ENCODE measurements at regions of chr3 and their contacts with region 1.

Region 1: DNA sequence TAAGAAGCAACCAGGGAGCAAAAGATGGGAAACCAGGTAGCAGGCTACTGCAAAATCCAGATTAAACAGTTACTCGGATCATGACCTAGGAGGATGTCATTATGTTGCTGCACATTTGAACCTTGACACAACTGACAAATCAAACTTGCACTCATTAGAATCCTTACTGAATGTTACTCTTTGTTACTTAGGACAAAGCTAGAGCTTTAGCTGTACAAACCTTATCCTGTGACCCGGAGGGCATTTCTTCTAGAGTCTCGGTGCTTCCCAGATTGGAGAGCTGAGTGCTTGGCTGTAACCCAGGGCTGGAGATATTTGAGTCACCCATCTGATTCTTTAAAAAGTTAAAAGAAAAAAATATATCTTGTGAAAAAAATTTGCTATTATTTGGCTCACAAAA is 43.4 kb downstream of the DCP1A start:
- DNase-seq: no peak
- ATAC-seq: no peak
- H3K4me3 ChIP-seq: no peak overlapping the region
- H3K27ac ChIP-seq: no peak overlapping the region
- H3K4me1 ChIP-seq: no peaks in the 10 kb centered on the region
- H3K27me3 ChIP-seq: no peaks in the 10 kb centered on the region
- CTCF ChIP-seq: no peak
- EP300 ChIP-seq: no peak
- POLR2A ChIP-seq: no peak
- RAD21 ChIP-seq: no peak

Region 2: DNA sequence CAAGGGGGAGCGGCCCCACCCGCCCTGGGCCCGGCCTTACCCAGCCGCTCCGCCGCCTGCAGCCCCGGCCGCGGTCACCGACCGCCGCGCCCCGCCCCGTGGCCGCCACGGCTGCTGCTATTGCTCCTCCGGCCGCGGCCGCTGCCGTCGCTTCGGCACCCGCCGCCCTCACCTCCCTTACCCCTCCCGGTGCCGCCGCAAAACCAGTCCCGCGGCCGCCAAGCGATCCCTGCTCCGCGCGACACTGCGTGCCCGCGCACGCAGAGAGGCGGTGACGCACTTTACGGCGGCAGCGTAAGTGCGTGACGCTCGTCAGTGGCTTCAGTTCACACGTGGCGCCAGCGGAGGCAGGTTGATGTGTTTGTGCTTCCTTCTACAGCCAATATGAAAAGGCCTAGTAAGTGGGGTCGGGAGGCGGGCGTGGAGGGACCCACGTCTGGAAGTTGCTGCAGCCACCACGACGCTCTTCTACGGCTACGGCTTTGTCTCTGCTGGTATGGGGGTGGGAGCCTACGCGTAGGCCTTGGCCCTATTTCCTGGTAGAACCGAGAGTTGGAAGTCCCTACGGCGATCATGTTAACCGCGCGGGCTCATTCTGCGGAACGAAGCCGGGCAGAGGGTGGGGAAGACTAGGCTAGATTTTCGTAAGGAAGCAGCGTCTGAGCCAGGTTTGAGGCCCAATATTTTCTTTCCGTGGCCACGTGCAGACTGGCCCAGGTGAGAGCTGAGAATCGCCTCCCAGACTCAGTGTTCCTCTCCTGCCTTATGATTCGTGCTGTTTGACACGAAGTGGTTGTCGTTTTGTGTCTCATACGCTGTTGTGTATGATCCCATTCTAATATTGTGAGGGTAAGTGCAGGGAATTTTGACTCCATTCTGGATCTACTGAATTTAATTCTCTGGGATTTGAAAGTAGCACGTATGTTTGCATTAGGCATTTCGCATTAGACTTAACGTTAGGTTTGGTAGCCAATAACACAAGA is 618.0 kb before region 1 on chr3 and contains the starts of genes GNL3 and PBRM1:
- CTCF ChIA-PET with region 1: no interaction called
- POLR2A ChIA-PET with region 1: no interaction called
- RAD21 ChIA-PET with region 1: no interaction called
- SMC1A ChIA-PET with region 1: no interaction called
- in situ Hi-C with region 1: no loop called
- intact Hi-C with region 1: no loop called
- DNase-seq: peak; percentile 82
- ATAC-seq: peak; percentile 74
- H3K4me3 ChIP-seq: peak within 1 kb of the TSS; percentile 91
- H3K27ac ChIP-seq: peak within 1 kb of the TSS; percentile 90
- H3K4me1 ChIP-seq: peaks cover 30% of the 10 kb centered on the region
- H3K27me3 ChIP-seq: no peaks in the 10 kb centered on the region
- CTCF ChIP-seq: no peak
- EP300 ChIP-seq: no peak
- POLR2A ChIP-seq: peak; percentile 93
- RAD21 ChIP-seq: no peak
- polyA plus RNA-seq, gene GNL3: 246 to 274 TPM
- polyA plus RNA-seq, gene PBRM1: 8.9 to 14.1 TPM

Region 3: DNA sequence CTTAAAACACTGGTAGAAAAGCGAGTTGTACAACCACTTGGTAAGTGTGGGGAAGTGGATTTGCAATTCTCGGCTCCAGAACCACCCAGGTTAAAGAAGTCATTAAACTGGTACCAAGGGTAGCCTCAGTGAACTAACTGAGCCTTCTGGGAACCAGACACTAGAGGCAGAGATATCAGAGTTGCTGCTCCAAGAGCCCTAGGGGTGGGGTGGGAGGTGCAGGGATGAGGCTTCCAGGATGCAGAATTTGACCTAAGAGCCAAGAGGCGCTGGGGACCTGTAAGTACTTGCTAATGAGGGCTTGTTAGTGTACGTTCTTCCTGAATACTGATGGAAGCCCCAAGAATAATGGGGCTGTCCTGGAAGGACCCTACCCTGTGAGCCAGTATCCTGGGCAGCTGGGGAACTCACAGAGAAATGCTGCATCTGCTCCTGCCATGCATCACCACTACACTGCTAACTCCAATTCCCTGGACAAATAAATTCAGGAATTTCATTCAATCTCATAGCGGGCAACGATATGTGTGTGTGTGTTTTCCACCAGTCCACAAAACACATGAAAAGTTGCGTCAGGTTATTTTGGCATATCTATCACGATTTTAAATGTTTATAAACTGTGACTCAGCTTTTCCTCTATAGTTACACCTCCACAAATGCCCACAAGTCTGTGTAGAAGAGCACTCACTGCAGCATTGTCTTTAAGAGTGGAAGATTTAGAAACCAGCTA is 430.4 kb before region 1 on chr3:
- CTCF ChIA-PET with region 1: no interaction called
- POLR2A ChIA-PET with region 1: no interaction called
- RAD21 ChIA-PET with region 1: no interaction called
- SMC1A ChIA-PET with region 1: no interaction called
- in situ Hi-C with region 1: no loop called
- intact Hi-C with region 1: no loop called
- DNase-seq: no peak
- ATAC-seq: no peak
- H3K4me3 ChIP-seq: no peak overlapping the region
- H3K27ac ChIP-seq: no peak overlapping the region
- H3K4me1 ChIP-seq: peaks cover 7% of the 10 kb centered on the region; the same call in 1 of the 2 replicates
- H3K27me3 ChIP-seq: no peaks in the 10 kb centered on the region
- CTCF ChIP-seq: no peak
- EP300 ChIP-seq: no peak
- POLR2A ChIP-seq: no peak
- RAD21 ChIP-seq: no peak

Region 4: GRCh38 chr3:53287131-53287629 is 16.8 kb before region 1 on chr3:
- CTCF ChIA-PET with region 1: interaction called, 11 read pairs
- POLR2A ChIA-PET with region 1: no interaction called
- RAD21 ChIA-PET with region 1: no interaction called
- SMC1A ChIA-PET with region 1: no interaction called
- in situ Hi-C with region 1: no loop called
- intact Hi-C with region 1: no loop called
- DNase-seq: no peak
- ATAC-seq: no peak
- H3K4me3 ChIP-seq: no peak overlapping the region
- H3K27ac ChIP-seq: no peak overlapping the region
- H3K4me1 ChIP-seq: no peaks in the 10 kb centered on the region
- H3K27me3 ChIP-seq: no peaks in the 10 kb centered on the region
- CTCF ChIP-seq: no peak
- EP300 ChIP-seq: no peak
- POLR2A ChIP-seq: no peak
- RAD21 ChIP-seq: no peak

Region 5: GRCh38 chr3:53347261-53348064 is 43.5 kb after region 1 on chr3 and contains the start of gene DCP1A:
- CTCF ChIA-PET with region 1: interaction called, 14 read pairs
- POLR2A ChIA-PET with region 1: interaction called, 4 read pairs
- RAD21 ChIA-PET with region 1: no interaction called
- SMC1A ChIA-PET with region 1: interaction called, 3 read pairs
- in situ Hi-C with region 1: no loop called
- intact Hi-C with region 1: no loop called
- DNase-seq: peak; percentile 89
- ATAC-seq: peak; percentile 97
- H3K4me3 ChIP-seq: peak within 1 kb of the TSS; percentile 99
- H3K27ac ChIP-seq: peak within 1 kb of the TSS; percentile 94
- H3K4me1 ChIP-seq: no peaks in the 10 kb centered on the region
- H3K27me3 ChIP-seq: no peaks in the 10 kb centered on the region
- CTCF ChIP-seq: no peak
- EP300 ChIP-seq: 0 out of 4 replicates have a peak, but pooled peaks of 1 of the 2 experiments have one; percentile 41
- POLR2A ChIP-seq: peak; percentile 99
- RAD21 ChIP-seq: no peak
- polyA plus RNA-seq, gene DCP1A: 16.6 to 25.8 TPM

Region 6: GRCh38 chr3:53544357-53544756 is 240.4 kb after region 1 on chr3:
- CTCF ChIA-PET with region 1: no interaction called
- POLR2A ChIA-PET with region 1: no interaction called
- RAD21 ChIA-PET with region 1: no interaction called
- SMC1A ChIA-PET with region 1: no interaction called
- in situ Hi-C with region 1: no loop called
- intact Hi-C with region 1: no loop called
- DNase-seq: no peak
- ATAC-seq: peak; percentile 35; the same call in 2 of the 3 replicates
- H3K4me3 ChIP-seq: no peak overlapping the region
- H3K27ac ChIP-seq: no peak overlapping the region
- H3K4me1 ChIP-seq: no peaks in the 10 kb centered on the region
- H3K27me3 ChIP-seq: no peaks in the 10 kb centered on the region
- CTCF ChIP-seq: no peak
- EP300 ChIP-seq: no peak
- POLR2A ChIP-seq: no peak
- RAD21 ChIP-seq: no peak

Region 7: GRCh38 chr3:53613125-53613524 is 309.2 kb after region 1 on chr3:
- CTCF ChIA-PET with region 1: no interaction called
- POLR2A ChIA-PET with region 1: no interaction called
- RAD21 ChIA-PET with region 1: no interaction called
- SMC1A ChIA-PET with region 1: no interaction called
- in situ Hi-C with region 1: no loop called
- intact Hi-C with region 1: no loop called
- DNase-seq: no peak
- ATAC-seq: peak; percentile 58
- H3K4me3 ChIP-seq: no peak overlapping the region
- H3K27ac ChIP-seq: no peak overlapping the region
- H3K4me1 ChIP-seq: no peaks in the 10 kb centered on the region
- H3K27me3 ChIP-seq: no peaks in the 10 kb centered on the region; a peak in 1 of 4 replicates
- CTCF ChIP-seq: no peak
- EP300 ChIP-seq: no peak
- POLR2A ChIP-seq: no peak
- RAD21 ChIP-seq: no peak

Measured in GM12878 (cell line).